Common myeloid progenitor, CD34-positive (primary cell): ENCODE measurements at regions of chr11 and their contacts with region 1.

Region 1: DNA sequence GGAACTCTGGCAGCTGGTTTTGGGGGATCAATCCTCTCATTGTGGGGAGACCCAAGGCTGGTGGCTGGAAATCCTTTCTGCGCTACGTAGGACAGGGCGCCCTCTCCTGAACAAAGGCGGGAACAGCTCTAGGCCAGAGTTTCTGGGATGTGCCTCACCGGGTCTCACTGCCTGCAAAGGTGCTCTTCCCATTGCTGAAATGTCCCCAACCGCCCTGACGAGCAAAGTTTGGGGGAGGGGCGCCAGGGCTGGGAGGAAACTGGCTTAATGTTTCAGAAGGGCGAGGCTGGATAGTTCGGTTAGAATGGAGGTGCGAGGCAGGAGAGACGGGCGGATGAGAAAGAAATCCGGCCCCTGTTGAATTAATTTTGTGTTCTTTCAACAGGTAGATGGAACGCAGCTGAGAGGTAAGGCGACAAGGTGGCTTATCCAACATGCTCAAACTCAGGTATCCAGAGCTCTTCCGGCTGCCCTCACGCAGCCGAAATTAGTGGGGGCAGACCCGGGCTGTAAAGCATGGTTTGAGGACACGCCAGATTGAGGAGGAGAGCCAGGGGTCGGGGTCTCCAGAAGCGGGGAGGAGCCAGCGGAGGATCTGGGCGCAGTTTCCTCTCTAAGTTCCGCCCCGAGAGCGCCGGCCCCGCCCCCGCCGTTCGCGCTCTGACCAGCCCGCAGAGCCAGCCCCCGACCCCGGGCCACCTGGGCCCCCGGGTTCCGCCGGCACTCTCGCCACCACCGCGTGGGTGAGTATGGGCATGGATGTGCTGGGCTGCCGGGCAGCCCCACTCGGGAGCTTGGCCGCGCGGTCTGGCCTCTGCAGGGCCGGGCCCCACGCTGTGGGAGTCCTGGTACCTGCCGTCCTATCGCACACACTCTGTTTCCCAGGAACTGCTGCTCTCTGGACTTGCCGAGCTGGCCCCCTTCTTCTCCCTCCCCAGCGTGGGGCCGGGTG is at the start of gene PGAP2:
- DNase-seq: peak; percentile 57 to 70 (median 65)
- H3K4me3 ChIP-seq: peak within 1 kb of the TSS; percentile 71 to 98 (median 91)
- H3K27ac ChIP-seq: peak within 1 kb of the TSS; percentile 46 to 82
- H3K4me1 ChIP-seq: peaks cover 0 to 19% (median 12%) of the 10 kb centered on the region in 4 experiments
- H3K27me3 ChIP-seq: no peaks in the 10 kb centered on the region

Region 2: GRCh38 chr11:3767536-3767935 is 40.6 kb before region 1 on chr11:
- CTCF ChIA-PET with region 1: interaction called, 135 read pairs
- POLR2A ChIA-PET with region 1: interaction called, 3 read pairs
- DNase-seq: no peak
- H3K4me3 ChIP-seq: no peak overlapping the region
- H3K27ac ChIP-seq: no peak overlapping the region
- H3K4me1 ChIP-seq: no peaks in the 10 kb centered on the region
- H3K27me3 ChIP-seq: no peaks in the 10 kb centered on the region

Region 3: GRCh38 chr11:3781423-3781822 is 26.8 kb before region 1 on chr11:
- CTCF ChIA-PET with region 1: interaction called, 136 read pairs
- POLR2A ChIA-PET with region 1: interaction called, 3 read pairs
- DNase-seq: peak; percentile 40 to 80 (median 74)
- H3K4me3 ChIP-seq: peak overlapping the region in 1 of 7 experiments; percentile 34
- H3K27ac ChIP-seq: peak overlapping the region; percentile 58 to 78
- H3K4me1 ChIP-seq: peaks cover 26 to 62% (median 43%) of the 10 kb centered on the region in 4 experiments
- H3K27me3 ChIP-seq: no peaks in the 10 kb centered on the region

Region 4: GRCh38 chr11:3824714-3825472 is 16.7 kb after region 1 on chr11:
- CTCF ChIA-PET with region 1: interaction called, 134 read pairs
- POLR2A ChIA-PET with region 1: interaction called, 7 read pairs
- DNase-seq: peak; percentile 85 to 91 (median 89)
- H3K4me3 ChIP-seq: no peak overlapping the region
- H3K27ac ChIP-seq: peak overlapping the region in 1 of 2 experiments; percentile 44
- H3K4me1 ChIP-seq: peaks cover under 1 to 13% (median 6%) of the 10 kb centered on the region in 4 experiments
- H3K27me3 ChIP-seq: no peaks in the 10 kb centered on the region

Region 5: DNA sequence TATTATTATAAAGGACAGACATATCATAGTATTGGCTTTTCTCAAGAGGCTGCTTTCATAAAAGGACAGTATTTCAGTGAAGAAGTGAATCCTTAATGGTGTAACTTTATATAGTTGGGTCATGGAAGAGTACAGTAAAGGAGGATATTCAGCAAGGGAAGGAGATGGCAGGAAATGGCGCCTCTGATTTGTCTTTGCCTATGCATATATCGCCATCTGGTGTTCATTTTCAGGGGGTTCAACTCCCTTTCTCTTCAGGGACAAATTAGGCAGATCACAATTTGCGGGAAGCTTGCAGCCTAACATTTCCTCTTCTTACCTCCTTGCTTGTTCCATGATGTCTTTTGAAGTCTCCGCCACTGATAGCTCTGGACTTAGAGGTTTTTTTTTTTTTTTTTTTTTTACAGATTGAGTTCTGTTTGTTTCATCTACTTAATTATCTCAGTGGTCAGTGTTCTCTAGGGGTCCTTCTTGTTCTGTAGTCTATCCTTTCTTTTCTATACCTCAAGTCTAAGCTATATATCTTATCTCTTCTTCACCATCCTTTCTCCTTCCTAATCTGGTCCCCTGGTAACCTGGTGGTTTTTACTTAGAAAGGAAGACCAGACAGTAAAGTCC is 264.6 kb after region 1 on chr11:
- CTCF ChIA-PET with region 1: interaction called, 39 read pairs
- POLR2A ChIA-PET with region 1: no interaction called
- DNase-seq: peak; percentile 80 to 88 (median 83)
- H3K4me3 ChIP-seq: no peak overlapping the region
- H3K27ac ChIP-seq: no peak overlapping the region
- H3K4me1 ChIP-seq: peaks cover 13 to 40% (median 30%) of the 10 kb centered on the region in 4 experiments
- H3K27me3 ChIP-seq: no peaks in the 10 kb centered on the region